Sciatic nerve (tissue), 2 donors: ENCODE measurements at regions of chr18 and their contacts with region 1.

Region 1: GRCh38 chr18:46073474-46074331 is 1.6 kb upstream of the PSTPIP2 start:
- DNase-seq: no peak
- ATAC-seq: peak; percentile 72

Region 2: GRCh38 chr18:45664824-45665763 is 408.6 kb before region 1 on chr18:
- intact Hi-C with region 1: loop called (anchors 10 kb)
- DNase-seq: peak; percentile 72
- ATAC-seq: peak; percentile 78

Region 3: GRCh38 chr18:45974088-45974536 is 99.6 kb before region 1 on chr18:
- intact Hi-C with region 1: loop called (anchors 5 kb)
- DNase-seq: peak; percentile 75
- ATAC-seq: peak; percentile 70

Region 4: GRCh38 chr18:46054956-46055837 is 18.5 kb before region 1 on chr18:
- intact Hi-C with region 1: no loop called
- DNase-seq: no peak
- ATAC-seq: no peak